ENCODE measurements at regions of chr16 and their contacts with region 1.

Region 1: GRCh38 chr16:70679666-70680494 is 6.0 kb downstream of the MTSS2 start:
- DNase-seq: no peak
- H3K4me3 ChIP-seq: no peak overlapping the region
- H3K27ac ChIP-seq: peak overlapping the region; percentile 80 to 92
- H3K4me1 ChIP-seq: peaks cover 34% of the 10 kb centered on the region
- H3K27me3 ChIP-seq: no peaks in the 10 kb centered on the region
- CTCF ChIP-seq: peak; percentile 55 to 76 (median 57)
- POLR2A ChIP-seq: no peak

Region 2: GRCh38 chr16:70737377-70738082 is 57.6 kb after region 1 on chr16:
- intact Hi-C with region 1: loop called (anchors 2 kb)
- DNase-seq: peak; percentile 88
- H3K4me3 ChIP-seq: no peak overlapping the region
- H3K27ac ChIP-seq: peak overlapping the region; percentile 89 to 93
- H3K4me1 ChIP-seq: peaks cover 16% of the 10 kb centered on the region
- H3K27me3 ChIP-seq: no peaks in the 10 kb centered on the region
- CTCF ChIP-seq: peak in 1 of 4 experiments; percentile 43
- POLR2A ChIP-seq: no peak

Region 3: DNA sequence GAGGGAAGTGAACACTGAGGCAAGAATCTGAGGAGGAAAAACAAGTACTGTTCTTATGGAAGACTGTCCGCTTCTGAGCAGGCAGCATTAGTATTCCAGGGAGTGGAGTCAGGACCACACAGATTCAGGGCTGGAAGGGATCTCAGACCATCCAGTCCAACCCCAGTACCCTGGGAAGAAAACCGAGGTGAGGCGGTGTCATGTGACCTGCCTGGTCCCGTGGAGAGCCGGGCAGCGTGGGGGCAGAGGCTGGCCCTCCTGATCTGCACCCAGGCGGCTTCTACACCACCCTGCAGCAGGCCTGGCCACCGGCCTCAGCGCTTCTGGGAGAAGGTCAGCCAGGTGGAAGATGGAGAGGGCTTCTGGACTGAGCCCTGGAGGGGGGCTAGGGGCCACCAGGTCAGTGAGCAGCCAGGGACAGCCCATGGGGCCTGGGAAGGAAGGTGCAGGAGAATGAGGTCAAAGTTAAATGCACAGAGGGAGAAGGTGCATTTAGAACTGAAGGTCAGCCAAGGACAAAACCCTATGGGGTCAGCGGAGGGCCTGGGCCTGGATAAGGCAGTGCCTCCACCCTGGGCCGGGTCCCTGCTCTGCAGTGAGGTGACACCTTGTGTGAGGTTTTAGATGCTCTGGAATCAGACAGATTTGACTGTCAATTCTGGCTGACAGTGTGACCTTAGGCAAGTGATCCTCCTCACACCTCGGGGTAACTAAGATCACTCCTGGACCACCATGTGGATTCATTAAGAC is 75.1 kb after region 1 on chr16:
- intact Hi-C with region 1: loop called (anchors 5 kb)
- DNase-seq: no peak
- H3K4me3 ChIP-seq: no peak overlapping the region
- H3K27ac ChIP-seq: no peak overlapping the region
- H3K4me1 ChIP-seq: no peaks in the 10 kb centered on the region
- H3K27me3 ChIP-seq: no peaks in the 10 kb centered on the region
- CTCF ChIP-seq: no peak
- POLR2A ChIP-seq: no peak

Region 4: DNA sequence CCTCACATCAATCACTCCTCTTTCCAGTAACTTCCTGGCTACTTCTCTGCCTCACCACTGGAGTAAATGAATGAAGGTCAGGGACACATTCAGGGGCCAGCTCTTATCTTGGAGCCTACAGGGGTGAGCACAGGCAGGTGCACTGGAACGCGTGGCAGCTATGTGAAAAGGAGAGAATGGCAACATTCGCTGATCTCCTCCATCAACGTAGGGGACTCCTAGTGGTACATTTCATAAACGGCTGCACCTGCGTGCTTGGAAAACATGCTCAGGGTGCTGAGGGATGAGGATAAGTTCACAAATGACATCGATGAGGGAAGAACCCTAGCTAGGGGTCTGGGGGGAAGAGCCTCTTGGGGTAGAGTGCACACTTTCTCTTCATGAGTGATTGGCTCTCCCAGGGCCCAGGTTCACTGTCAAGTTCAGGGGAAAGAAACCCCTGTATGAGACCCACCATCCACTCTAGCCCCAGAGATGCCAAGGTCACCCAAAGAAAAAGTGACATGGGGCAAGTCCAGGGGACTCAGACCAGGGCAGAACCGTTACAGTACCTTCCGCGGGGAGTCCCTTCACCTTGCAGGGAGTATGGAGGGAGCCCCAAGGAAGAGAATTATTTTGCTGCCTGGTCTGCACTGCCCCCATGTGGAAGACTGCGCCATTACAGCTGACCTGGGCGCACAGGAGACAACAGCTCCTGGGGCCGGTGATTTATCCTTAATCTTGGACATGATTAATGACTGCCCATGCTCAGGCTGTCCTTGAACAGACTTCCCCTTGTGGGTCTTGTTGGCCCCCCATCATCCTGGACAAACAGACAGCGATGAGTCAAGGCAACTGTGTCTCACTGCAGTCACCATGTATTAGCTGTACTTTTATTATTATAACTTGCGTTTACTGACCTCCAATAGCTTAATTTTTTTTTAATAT is 91.0 kb after region 1 on chr16:
- intact Hi-C with region 1: loop called (anchors 2 kb)
- DNase-seq: peak; percentile 55
- H3K4me3 ChIP-seq: no peak overlapping the region
- H3K27ac ChIP-seq: no peak overlapping the region
- H3K4me1 ChIP-seq: no peaks in the 10 kb centered on the region
- H3K27me3 ChIP-seq: no peaks in the 10 kb centered on the region
- CTCF ChIP-seq: peak; percentile 86 to 96 (median 94)
- POLR2A ChIP-seq: no peak